GM10248 (cell line): ENCODE measurements at regions of chr12 and their contacts with region 1.

Region 1: GRCh38 chr12:56571126-56571525 is 49.5 kb downstream of the RBMS2 start:
- DNase-seq: no peak
- CTCF ChIP-seq: no peak

Region 2: DNA sequence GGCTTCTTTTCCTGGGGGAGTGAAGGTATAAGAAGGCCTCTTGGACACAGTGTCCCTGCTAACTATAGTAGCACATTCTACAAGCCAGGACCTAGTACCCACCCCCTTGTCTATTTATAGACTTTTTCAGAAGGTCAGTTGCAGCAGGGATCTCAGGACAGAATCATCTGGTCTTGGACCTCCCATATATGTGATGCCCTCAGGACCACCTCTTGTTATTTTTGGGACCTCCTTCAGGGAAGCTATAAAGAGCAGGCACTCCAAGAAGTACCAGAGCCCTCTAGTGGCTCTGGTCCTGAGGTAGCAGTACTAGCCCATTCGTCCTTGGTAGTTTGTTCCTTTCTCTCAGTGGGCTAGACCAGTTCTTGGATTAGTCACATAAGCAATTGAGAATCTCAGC is 300.1 kb before region 1 on chr12:
- CTCF ChIA-PET with region 1: no interaction called
- POLR2A ChIA-PET with region 1: no interaction called
- DNase-seq: no peak
- CTCF ChIP-seq: peak; percentile 57

Region 3: GRCh38 chr12:56488041-56488955 is 82.8 kb before region 1 on chr12 and contains the start of gene GLS2:
- CTCF ChIA-PET with region 1: no interaction called
- POLR2A ChIA-PET with region 1: interaction called, 13 read pairs
- DNase-seq: peak; percentile 91
- CTCF ChIP-seq: no peak

Region 4: DNA sequence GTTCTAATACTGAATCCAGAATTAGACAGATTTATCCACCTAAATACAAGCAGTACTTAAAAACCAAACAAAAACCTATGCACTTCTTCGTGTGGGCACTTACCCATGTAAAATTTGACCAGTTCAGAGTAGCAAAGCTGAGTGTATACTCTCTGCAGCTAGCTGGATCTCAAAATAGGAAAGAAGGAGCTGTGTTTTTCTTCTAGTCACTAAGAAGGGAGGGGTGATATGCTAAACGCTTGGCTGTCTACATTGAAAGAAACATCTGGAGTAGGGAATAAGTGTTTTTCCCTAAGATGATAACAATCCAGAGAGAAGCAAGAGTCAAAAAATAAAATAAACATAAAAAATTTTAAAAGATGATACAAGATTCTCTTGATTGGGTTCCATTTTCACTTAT is 29.5 kb before region 1 on chr12:
- CTCF ChIA-PET with region 1: interaction called, 13 read pairs
- POLR2A ChIA-PET with region 1: interaction called, 3 read pairs
- DNase-seq: no peak
- CTCF ChIP-seq: no peak

Region 5: GRCh38 chr12:56657416-56658379 is 86.6 kb after region 1 on chr12:
- CTCF ChIA-PET with region 1: no interaction called
- POLR2A ChIA-PET with region 1: no interaction called
- DNase-seq: peak; percentile 39
- CTCF ChIP-seq: no peak